ENCODE measurements at regions of chr2 and their contacts with region 1.

Region 1: DNA sequence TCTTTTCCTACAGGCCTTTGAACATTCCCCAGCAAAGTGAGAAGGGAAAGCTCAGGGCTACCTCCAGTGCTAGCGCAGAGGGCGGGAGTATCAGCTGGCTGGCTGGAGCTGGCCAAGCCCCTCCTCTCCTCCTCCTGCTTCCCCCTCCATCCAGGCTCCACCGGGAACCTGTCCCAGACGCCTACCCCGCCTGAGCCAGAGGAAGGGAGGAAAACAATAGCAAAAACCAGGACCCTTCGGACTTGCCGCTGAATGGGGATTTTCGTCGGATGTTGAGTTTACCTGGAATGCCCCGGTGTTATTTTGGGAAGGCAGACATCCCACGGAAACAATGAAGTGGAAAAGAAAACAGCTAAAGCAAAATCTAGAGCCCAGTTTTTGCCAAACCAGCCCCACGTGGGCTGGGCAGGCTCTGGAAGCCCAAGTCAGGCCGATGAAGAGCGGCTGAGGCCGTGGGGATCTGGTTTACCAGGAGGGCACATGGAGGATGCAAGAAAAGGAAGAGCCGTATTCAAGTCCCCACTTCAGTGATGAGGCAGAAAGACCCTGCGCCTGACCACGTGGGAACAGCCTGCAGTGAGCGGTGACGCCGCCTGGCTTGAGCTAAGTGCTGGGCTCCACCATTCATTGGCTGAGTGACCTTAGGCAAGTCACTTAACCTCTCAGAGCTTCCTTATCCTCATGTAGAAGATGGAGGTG is 100.4 kb upstream of the LCLAT1 start:
- DNase-seq: peak; percentile 93

Region 2: DNA sequence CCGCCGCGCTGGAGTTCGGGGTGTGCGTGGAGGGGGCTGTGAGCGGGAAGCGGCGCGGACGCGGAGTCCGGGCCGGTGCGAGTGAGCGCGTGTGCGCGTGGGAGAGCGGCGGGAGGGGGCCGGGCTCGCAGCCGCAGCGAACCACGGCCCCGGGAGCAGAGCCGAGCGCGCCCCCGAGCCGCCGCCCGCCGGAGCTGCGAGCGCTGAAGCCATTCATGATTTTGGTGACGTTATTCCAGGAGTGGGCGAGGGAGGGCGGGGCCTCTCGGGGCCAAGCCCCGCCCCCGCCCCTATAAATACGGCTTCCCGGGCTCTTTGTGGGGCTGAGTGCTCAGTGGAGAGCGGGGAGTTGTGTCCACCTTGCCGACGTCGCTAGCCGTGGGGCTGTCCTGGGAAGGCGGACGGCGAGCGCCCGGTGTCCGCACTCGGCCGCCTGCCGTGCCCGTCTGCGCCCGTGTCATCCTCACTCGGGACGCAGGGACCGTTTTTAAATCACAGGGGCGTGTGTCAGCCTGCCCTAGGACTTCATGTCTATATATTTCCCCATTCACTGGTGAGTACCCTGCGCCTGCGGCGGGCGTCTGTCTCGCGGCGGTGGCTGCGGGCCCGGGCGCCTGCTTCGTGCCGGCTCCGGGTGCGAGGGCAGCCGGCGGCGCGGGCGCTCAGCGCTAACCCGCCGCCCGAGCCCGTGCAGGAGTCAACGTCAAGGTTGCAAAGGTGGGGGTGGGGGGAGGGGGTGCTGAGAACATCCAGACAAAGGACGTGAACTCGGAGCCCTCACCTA is 115.2 kb before region 1 on chr2 and contains the start of gene LBH:
- intact Hi-C with region 1: loop called (anchors 5 kb)
- DNase-seq: peak; percentile 94
- total RNA-seq, gene LBH: 208 TPM

Region 3: DNA sequence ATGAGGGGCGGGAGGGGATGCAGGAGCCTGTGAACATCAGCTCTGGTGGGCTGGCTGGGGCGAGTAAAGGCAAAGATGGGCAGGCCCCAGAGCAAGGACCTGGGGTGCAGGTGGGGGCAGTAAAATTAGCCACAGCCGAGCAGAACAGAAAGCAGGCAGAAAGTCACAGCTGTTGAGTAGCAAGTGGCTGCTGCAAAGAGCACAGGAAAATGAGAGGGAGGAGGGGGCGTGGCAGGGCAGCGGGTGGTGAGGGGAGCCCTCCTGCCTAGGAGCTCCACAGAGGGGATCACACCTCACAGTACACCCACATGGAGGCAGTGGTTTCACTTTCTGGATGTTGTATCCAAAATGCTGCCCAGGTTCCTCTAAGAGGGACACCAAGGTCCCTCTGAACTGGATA is 35.7 kb before region 1 on chr2:
- intact Hi-C with region 1: no loop called
- DNase-seq: no peak

Region 4: DNA sequence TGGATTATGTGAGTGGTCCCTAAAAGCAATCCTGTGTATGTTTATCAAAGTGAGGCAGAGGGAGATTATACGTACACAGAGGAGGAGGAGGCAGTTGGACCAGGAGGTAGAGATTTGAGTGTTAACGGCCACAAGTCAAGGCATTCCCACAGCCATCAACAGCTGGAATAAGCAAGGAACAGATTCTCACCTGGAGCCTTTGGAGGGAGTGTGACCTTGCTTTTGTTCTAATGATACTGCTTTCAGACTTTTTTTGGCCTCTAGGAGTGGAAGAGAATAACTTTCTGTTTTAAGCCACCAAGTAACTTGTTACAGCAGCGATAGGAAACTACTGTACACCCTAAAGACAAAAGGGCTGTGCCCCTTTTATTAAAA is 118.5 kb after region 1 on chr2:
- intact Hi-C with region 1: no loop called
- DNase-seq: no peak

Region 5: DNA sequence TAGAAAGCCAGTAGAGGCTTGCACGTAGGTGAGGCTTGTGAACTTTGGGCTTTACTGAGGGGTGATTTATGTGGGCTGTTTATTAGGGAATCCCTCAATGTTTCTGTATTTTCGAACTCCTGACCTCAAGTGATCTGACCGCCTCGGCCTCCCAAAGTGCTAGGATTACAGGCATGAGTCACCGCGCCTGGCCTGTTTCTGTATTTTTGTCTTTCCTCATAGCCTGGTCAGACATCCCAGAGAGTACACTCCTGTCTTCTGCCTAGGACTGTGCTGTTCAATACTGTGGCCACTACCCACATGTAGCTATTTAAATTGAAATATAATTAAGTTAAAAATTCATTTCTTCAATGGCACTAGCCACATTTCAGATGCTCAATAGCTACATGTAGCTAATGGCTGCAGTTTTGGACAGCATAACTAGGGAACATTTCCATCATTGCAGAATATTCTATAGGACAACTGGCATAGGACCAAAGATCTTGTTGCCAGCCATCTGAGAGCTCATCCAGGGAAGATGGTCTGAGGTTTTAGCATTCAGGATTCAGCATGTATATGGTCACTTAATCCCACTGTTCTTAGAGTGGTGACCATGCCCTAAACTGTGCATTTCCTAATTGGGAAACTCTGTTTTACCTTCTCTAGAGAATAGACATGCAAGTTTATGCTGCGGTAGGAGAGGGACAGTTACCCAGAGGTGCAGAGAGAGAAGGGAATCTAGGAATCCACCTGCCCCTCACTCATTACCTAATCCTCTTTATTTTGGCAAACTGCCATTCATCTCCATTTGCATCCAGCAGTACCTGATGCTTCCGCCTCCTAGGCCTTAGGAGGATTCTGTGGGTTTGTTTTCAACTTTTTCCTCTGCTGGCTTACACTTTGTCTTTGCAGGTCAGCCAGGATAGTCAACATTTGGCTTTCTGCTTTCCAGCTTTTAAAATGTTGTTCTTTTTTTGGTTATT is 164.8 kb after region 1 on chr2:
- intact Hi-C with region 1: loop called (anchors 5 kb)
- DNase-seq: no peak

Region 6: GRCh38 chr2:30584116-30584515 is 237.5 kb after region 1 on chr2:
- intact Hi-C with region 1: loop called (anchors 5 kb)
- DNase-seq: no peak